PC-9 (cell line): ENCODE measurements at regions of chr1 and their contacts with region 1.

Region 1: GRCh38 chr1:63920154-63921117 is 146.6 kb downstream of the ROR1 start:
- DNase-seq: peak; percentile 83 to 100
- H3K4me3 ChIP-seq: no peak overlapping the region; the same call in 1 of the 2 replicates
- H3K27ac ChIP-seq: peak overlapping the region; percentile 97
- H3K4me1 ChIP-seq: peaks cover 69% of the 10 kb centered on the region
- H3K27me3 ChIP-seq: no peaks in the 10 kb centered on the region
- CTCF ChIP-seq: peak; percentile 67

Region 2: DNA sequence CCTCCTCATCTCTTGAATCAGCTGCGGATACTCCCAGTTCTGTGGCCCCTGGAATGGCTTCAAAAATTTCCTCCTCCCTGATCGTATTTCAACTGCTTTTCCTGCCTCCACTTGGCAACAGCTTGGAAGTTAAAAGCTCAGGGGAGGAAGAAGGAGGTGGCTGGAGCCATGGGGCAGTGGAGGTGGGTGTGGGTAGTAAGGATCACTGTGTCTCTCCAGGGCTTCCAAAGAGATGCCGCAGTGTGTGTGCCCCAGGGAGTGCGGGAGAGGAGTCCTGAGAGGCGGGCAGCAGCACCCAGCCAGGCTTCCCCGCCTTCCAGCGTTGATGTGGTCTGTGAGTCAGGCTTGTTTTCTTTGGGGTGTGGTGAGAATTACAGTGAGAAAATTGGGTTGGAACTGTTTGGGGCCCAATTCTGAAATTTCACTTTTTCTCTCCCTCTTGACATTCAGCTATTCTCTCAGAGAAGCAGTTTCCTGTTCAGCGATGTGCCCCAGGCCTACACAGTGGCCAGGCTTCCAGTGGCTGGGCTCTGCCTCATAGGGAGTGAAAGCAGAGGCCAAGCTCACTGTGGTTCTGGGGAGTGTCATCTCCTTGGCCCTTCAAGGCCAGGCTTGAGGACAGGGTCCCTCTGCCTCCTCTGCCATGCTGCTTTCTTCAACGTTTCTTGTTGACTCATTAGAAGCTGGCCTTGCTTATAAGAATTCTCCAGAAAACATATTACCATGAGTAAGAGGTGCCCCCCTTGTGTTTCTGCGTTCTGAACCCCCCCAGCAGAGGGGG is 258.2 kb before region 1 on chr1:
- CTCF ChIA-PET with region 1: interaction called, 4 read pairs
- POLR2A ChIA-PET with region 1: no interaction called
- intact Hi-C with region 1: loop called (anchors 1 kb)
- DNase-seq: peak; percentile 91 to 93
- H3K4me3 ChIP-seq: peak overlapping the region; percentile 45; the same call in 1 of the 2 replicates
- H3K27ac ChIP-seq: peak overlapping the region; percentile 100
- H3K4me1 ChIP-seq: peaks cover 62% of the 10 kb centered on the region
- H3K27me3 ChIP-seq: no peaks in the 10 kb centered on the region
- CTCF ChIP-seq: no peak

Region 3: GRCh38 chr1:63847308-63847910 is 73.0 kb before region 1 on chr1:
- CTCF ChIA-PET with region 1: interaction called, 3 read pairs
- POLR2A ChIA-PET with region 1: interaction called, 3 read pairs
- intact Hi-C with region 1: loop called (anchors 1 kb)
- DNase-seq: peak; percentile 55 to 80
- H3K4me3 ChIP-seq: no peak overlapping the region
- H3K27ac ChIP-seq: 0 out of 2 replicates have a peak overlapping the region, but pooled peaks have one; percentile 9
- H3K4me1 ChIP-seq: peaks cover 14% of the 10 kb centered on the region
- H3K27me3 ChIP-seq: no peaks in the 10 kb centered on the region
- CTCF ChIP-seq: no peak

Region 4: DNA sequence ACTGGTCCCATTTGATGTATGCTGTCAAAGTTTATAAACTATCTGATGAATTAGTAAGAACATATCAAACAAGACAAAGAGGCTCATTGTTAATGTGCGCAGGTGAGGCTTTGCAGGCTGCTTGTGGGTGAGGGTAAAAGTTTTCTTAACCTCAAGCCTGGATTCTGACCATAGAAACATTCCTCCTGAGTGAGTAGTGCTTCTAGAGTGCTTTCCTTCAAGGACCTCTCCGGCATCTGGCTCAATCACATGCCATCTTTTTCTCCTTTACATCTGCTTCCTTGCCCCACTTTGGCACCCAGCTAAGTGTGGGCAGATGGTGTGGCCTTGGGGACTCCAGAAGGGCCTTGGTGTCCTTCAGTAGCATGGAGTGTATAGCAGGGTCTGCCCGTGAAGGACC is 42.6 kb before region 1 on chr1:
- CTCF ChIA-PET with region 1: no interaction called
- POLR2A ChIA-PET with region 1: interaction called, 5 read pairs
- intact Hi-C with region 1: loop called (anchors 1 kb)
- DNase-seq: peak; percentile 65 to 96
- H3K4me3 ChIP-seq: peak overlapping the region; percentile 1; the same call in 1 of the 2 replicates
- H3K27ac ChIP-seq: peak overlapping the region; percentile 94
- H3K4me1 ChIP-seq: peaks cover 70% of the 10 kb centered on the region
- H3K27me3 ChIP-seq: no peaks in the 10 kb centered on the region
- CTCF ChIP-seq: no peak

Region 5: GRCh38 chr1:63969441-63969901 is 49.0 kb after region 1 on chr1:
- CTCF ChIA-PET with region 1: no interaction called
- POLR2A ChIA-PET with region 1: no interaction called
- intact Hi-C with region 1: loop called (anchors 2 kb)
- DNase-seq: peak; percentile 43 to 70
- H3K4me3 ChIP-seq: no peak overlapping the region
- H3K27ac ChIP-seq: peak overlapping the region; percentile 59
- H3K4me1 ChIP-seq: peaks cover 27% of the 10 kb centered on the region
- H3K27me3 ChIP-seq: no peaks in the 10 kb centered on the region
- CTCF ChIP-seq: no peak

Region 6: DNA sequence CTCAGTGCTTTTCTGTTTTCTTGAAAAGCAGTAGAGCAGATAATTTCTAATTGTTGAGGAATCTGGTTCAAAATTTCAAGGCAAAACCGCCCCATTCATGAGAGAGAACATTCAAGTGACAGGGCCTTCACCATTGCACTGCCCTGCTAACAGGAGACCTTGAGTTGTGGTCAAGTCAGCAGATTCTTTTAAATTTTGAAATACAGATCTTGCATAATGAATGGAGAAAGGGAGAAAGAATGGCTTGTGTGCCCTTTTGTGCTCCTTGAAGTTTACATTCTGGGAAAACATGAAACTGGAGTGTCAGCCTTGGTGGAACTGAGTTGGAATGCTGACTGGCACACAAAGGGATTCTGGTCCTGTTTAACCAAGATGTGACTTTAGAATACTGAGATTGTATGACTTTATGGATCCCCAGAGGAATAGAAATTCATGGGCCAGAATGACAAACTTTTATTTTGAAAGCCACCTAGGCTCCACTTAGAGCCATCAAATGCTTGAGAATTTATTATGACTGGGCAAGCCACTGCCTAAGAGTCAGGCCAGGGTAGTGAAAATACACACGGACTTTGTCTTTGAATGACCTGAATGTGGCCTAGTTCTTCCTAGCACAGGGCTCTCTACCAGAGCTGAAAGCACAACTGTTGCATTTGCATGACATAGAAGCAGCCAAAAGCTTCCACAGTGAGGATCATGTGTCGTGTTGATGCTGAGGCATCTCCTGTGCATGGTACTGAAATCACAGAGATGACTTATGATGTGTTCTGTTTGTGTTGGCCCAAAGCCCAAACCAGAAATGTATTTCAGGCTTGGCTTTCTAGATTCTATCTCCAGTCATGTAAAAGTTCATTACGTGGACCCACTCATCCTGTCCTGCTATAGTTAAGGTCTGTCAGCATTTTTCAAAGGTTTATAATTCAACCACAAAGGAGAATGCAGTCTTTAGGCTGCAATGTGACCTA is 118.8 kb after region 1 on chr1:
- CTCF ChIA-PET with region 1: no interaction called
- POLR2A ChIA-PET with region 1: no interaction called
- intact Hi-C with region 1: loop called (anchors 1 kb)
- DNase-seq: peak; percentile 76 to 94
- H3K4me3 ChIP-seq: no peak overlapping the region
- H3K27ac ChIP-seq: peak overlapping the region; percentile 60
- H3K4me1 ChIP-seq: peaks cover 58% of the 10 kb centered on the region
- H3K27me3 ChIP-seq: no peaks in the 10 kb centered on the region
- CTCF ChIP-seq: no peak

Region 7: GRCh38 chr1:64223329-64224151 is 303.1 kb after region 1 on chr1:
- CTCF ChIA-PET with region 1: no interaction called
- POLR2A ChIA-PET with region 1: no interaction called
- intact Hi-C with region 1: loop called (anchors 5 kb)
- DNase-seq: peak; percentile 11 to 74
- H3K4me3 ChIP-seq: no peak overlapping the region; the same call in 1 of the 2 replicates
- H3K27ac ChIP-seq: peak overlapping the region; percentile 83
- H3K4me1 ChIP-seq: peaks cover 14% of the 10 kb centered on the region
- H3K27me3 ChIP-seq: no peaks in the 10 kb centered on the region
- CTCF ChIP-seq: no peak